ENCODE measurements at regions of chr7 and their contacts with region 1.

Region 1: GRCh38 chr7:100563809-100564400 is 9.8 kb downstream of the SAP25 start:
- DNase-seq: no peak
- ATAC-seq: peak; percentile 84
- H3K4me3 ChIP-seq: no peak overlapping the region
- H3K27ac ChIP-seq: no peak overlapping the region
- H3K4me1 ChIP-seq: peaks cover 8% of the 10 kb centered on the region
- H3K27me3 ChIP-seq: no peaks in the 10 kb centered on the region
- CTCF ChIP-seq: peak; percentile 94 to 98 (median 97)
- EP300 ChIP-seq: no peak
- POLR2A ChIP-seq: peak; percentile 35
- RAD21 ChIP-seq: peak; percentile 71

Region 2: GRCh38 chr7:100719523-100720319 is 155.8 kb after region 1 on chr7:
- CTCF ChIA-PET with region 1: interaction called, 12 read pairs
- POLR2A ChIA-PET with region 1: no interaction called
- RAD21 ChIA-PET with region 1: no interaction called
- SMC1A ChIA-PET with region 1: no interaction called
- in situ Hi-C with region 1: no loop called
- intact Hi-C with region 1: no loop called
- DNase-seq: no peak
- ATAC-seq: no peak
- H3K4me3 ChIP-seq: no peak overlapping the region
- H3K27ac ChIP-seq: no peak overlapping the region
- H3K4me1 ChIP-seq: no peaks in the 10 kb centered on the region
- H3K27me3 ChIP-seq: peaks cover 4 to 11% of the 10 kb centered on the region in 2 experiments
- CTCF ChIP-seq: no peak
- EP300 ChIP-seq: no peak
- POLR2A ChIP-seq: no peak
- RAD21 ChIP-seq: no peak